ENCODE measurements at regions of chr12 and their contacts with region 1.

Region 1: GRCh38 chr12:17778242-17778641 is 311.8 kb downstream of the RERGL start:
- H3K4me3 Mint-ChIP-seq: no peak overlapping the region
- H3K27ac Mint-ChIP-seq: no peak overlapping the region
- H3K4me1 Mint-ChIP-seq: no peaks in the 10 kb centered on the region
- H3K27me3 Mint-ChIP-seq: no peaks in the 10 kb centered on the region

Region 2: GRCh38 chr12:17818931-17819330 is 40.7 kb after region 1 on chr12:
- intact Hi-C with region 1: no loop called
- H3K4me3 Mint-ChIP-seq: no peak overlapping the region
- H3K27ac Mint-ChIP-seq: no peak overlapping the region
- H3K4me1 Mint-ChIP-seq: no peaks in the 10 kb centered on the region
- H3K27me3 Mint-ChIP-seq: no peaks in the 10 kb centered on the region

Region 3: DNA sequence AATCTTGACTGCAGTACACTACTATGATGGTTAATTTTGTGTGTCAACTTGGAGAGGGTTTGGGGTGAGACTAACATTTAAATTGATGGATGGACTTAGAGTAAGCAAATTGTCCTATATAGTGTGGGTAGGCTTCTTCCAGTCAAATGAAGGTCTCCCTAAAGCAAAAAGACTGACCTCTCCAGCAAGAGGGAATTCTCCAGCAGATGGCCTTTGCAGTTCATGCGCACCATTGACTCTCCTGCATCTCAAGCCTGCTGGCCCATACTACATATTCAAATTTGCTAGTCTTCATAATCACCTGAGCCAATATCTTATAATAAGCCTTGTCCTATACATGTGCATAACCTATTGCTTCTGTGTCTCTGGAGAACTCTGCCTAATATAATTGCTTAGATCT is 51.6 kb after region 1 on chr12:
- intact Hi-C with region 1: no loop called
- H3K4me3 Mint-ChIP-seq: no peak overlapping the region
- H3K27ac Mint-ChIP-seq: no peak overlapping the region
- H3K4me1 Mint-ChIP-seq: no peaks in the 10 kb centered on the region
- H3K27me3 Mint-ChIP-seq: no peaks in the 10 kb centered on the region

Region 4: DNA sequence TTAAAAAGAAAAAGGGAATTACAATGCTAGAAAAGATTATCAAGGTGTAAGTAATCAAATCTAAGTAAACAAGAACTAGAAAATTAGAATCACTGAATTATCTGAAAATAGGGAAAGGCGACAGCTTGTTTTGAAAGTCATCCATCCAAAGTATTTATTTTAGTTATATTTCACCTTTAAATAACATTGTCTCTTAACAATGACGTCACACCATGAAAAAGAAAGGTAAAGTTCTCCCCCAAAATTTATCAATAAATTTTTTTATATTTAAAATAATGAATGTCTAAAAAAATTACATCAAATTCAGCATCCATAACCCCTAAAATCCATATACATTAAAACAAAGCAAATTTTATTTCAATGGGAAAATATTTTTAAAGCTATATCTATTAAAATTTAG is 88.6 kb after region 1 on chr12:
- intact Hi-C with region 1: loop called (anchors 2 kb)
- H3K4me3 Mint-ChIP-seq: no peak overlapping the region
- H3K27ac Mint-ChIP-seq: no peak overlapping the region
- H3K4me1 Mint-ChIP-seq: no peaks in the 10 kb centered on the region
- H3K27me3 Mint-ChIP-seq: no peaks in the 10 kb centered on the region

Region 5: GRCh38 chr12:18074001-18074400 is 295.8 kb after region 1 on chr12:
- intact Hi-C with region 1: no loop called
- H3K4me3 Mint-ChIP-seq: no peak overlapping the region
- H3K27ac Mint-ChIP-seq: no peak overlapping the region
- H3K4me1 Mint-ChIP-seq: no peaks in the 10 kb centered on the region
- H3K27me3 Mint-ChIP-seq: no peaks in the 10 kb centered on the region

Region 6: GRCh38 chr12:19095756-19096480 is 1317.7 kb after region 1 on chr12:
- intact Hi-C with region 1: no loop called
- H3K4me3 Mint-ChIP-seq: no peak overlapping the region
- H3K27ac Mint-ChIP-seq: no peak overlapping the region
- H3K4me1 Mint-ChIP-seq: no peaks in the 10 kb centered on the region
- H3K27me3 Mint-ChIP-seq: no peaks in the 10 kb centered on the region